Vagina (tissue), 2 donors: ENCODE measurements at regions of chr18 and their contacts with region 1.

Region 1: DNA sequence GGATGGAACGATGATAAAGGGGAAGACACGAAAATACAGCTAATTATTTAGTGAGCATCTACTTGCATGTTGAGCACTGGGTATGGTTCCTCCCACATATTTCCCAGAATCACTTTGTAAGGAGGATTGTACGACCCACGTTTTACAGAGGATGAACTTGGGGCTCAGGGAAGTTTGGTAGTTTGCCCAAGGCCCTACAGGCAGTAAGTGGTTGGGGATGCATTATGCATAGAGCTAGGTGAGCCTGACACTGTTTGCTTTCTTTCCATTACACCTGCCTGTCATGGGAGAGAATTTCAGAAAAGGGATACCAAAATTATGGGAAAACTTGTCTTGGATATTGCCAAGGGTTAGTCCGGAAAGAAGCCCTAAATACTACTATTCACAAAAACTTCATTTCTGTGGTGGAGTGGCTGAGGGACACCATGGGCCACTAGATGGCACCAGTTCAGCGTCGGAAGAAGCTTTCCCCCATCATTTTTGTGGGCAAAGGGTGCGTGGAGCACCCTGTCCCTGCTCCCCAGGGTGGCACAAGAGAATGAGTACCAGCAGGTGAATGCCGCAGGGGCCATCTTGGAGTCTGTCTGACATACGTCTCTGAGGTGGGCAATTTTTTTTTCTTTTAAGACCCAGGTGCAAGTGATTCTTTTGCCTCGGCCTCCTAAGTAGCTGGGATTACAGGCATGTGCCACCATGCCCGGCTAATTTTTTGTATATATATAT is 23.5 kb upstream of the C18orf32 start:
- DNase-seq: no peak
- H3K4me3 ChIP-seq: no peak overlapping the region
- H3K27ac ChIP-seq: no peak overlapping the region
- H3K4me1 ChIP-seq: no peaks in the 10 kb centered on the region
- H3K27me3 ChIP-seq: no peaks in the 10 kb centered on the region
- CTCF ChIP-seq: peak; percentile 25 to 69 (median 51)
- POLR2A ChIP-seq: no peak

Region 2: GRCh38 chr18:49858309-49859020 is 347.9 kb after region 1 on chr18:
- intact Hi-C with region 1: loop called (anchors 5 kb)
- DNase-seq: no peak
- H3K4me3 ChIP-seq: no peak overlapping the region
- H3K27ac ChIP-seq: no peak overlapping the region
- H3K4me1 ChIP-seq: peaks cover 12% of the 10 kb centered on the region
- H3K27me3 ChIP-seq: no peaks in the 10 kb centered on the region
- CTCF ChIP-seq: peak; percentile 50 to 90 (median 80)
- POLR2A ChIP-seq: no peak